SK-N-SH (cell line): ENCODE measurements at regions of chr1 and their contacts with region 1.

Region 1: GRCh38 chr1:156717275-156717805 is 10.9 kb upstream of the METTL25B start:
- DNase-seq: no peak
- H3K4me3 ChIP-seq: no peak overlapping the region
- H3K27ac ChIP-seq: no peak overlapping the region
- H3K4me1 ChIP-seq: peaks cover 0 to 17% of the 10 kb centered on the region in 2 experiments; a peak in 2 of 4 replicates
- H3K27me3 ChIP-seq: no peaks in the 10 kb centered on the region
- CTCF ChIP-seq: no peak
- EP300 ChIP-seq: no peak
- RAD21 ChIP-seq: no peak

Region 2: GRCh38 chr1:156885314-156885713 is 168.0 kb after region 1 on chr1:
- CTCF ChIA-PET with region 1: interaction called, 4 read pairs
- POLR2A ChIA-PET with region 1: interaction called, 11 read pairs
- DNase-seq: no peak
- H3K4me3 ChIP-seq: no peak overlapping the region
- H3K27ac ChIP-seq: no peak overlapping the region
- H3K4me1 ChIP-seq: peaks cover 0 to 56% of the 10 kb centered on the region in 2 experiments; a peak in 1 of 4 replicates
- H3K27me3 ChIP-seq: no peaks in the 10 kb centered on the region; the same call in 1 of the 2 replicates
- CTCF ChIP-seq: no peak
- EP300 ChIP-seq: no peak
- RAD21 ChIP-seq: no peak